MCF 10A (cell line): ENCODE measurements at regions of chr1 and their contacts with region 1.

Region 1: DNA sequence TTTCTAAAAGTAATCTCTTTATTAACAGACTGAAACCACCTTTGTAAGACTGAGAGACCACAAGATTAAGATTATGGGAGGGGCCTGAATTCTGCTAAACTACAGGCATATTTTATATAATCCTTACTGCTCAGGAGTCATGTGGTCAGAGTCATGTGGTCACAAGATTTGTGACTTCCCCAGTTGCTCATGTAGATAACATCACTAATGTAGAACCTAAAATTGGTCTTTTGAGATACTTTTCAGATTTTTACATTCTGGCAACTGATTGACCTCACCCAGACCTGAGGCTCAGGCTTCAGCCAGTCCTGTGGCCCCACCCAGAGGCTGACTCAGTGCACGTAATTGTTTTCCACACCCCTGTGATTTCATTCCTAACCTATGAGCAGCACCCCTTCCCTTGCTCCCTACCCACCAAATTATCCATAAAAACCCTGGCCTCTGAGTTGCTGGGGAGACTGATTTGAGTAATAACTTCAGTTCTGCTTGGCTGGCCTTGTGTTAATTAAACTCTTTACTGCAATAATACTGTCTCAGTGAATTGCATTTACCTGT is 41.8 kb upstream of the ZNF326 start:
- DNase-seq: peak; percentile 87
- H3K4me3 Mint-ChIP-seq: no peak overlapping the region
- H3K27ac Mint-ChIP-seq: peak overlapping the region; percentile 64
- H3K4me1 Mint-ChIP-seq: peaks cover 17% of the 10 kb centered on the region
- H3K27me3 Mint-ChIP-seq: no peaks in the 10 kb centered on the region
- CTCF ChIP-seq: peak; percentile 24

Region 2: DNA sequence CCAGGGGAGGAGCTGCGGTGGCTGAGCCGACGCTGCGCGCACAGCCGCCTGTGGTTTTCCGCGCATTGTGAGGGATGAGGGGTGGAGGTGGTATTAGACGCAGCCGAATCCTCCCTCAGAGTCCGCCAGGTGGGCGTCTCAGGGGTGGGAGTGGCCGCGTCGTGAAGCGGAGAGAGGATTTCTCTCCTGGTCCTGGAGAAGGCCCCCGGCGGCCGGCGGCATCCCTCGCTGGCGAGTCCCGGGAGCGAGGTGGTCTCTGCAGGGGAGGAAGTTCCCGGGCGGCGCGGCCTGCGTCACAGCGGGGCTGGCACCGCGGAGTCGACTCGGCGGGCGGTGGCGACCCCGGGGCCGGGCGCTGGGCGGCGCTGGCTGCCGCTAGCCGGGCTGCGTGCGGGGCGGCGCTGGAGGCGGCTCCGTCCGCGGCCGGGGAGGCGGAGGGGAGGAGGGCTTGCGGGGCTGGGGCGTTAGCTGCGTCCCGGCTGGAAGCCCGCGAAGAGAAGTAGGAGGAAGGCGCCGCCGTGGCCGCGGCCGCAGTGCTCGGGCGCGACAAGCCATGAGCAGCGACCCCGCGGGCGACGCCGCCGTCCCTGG is 320.4 kb before region 1 on chr1 and contains the start of gene LRRC8C:
- CTCF ChIA-PET with region 1: no interaction called
- POLR2A ChIA-PET with region 1: no interaction called
- intact Hi-C with region 1: loop called (anchors 10 kb)
- DNase-seq: peak; percentile 59
- H3K4me3 Mint-ChIP-seq: peak within 1 kb of the TSS; percentile 85
- H3K27ac Mint-ChIP-seq: peak within 1 kb of the TSS; percentile 57
- H3K4me1 Mint-ChIP-seq: peaks cover 18% of the 10 kb centered on the region
- H3K27me3 Mint-ChIP-seq: no peaks in the 10 kb centered on the region
- CTCF ChIP-seq: peak; percentile 40
- total RNA-seq, gene LRRC8C: 4.4 TPM in 2 replicates

Region 3: GRCh38 chr1:89804642-89805237 is 148.4 kb before region 1 on chr1:
- CTCF ChIA-PET with region 1: interaction called, 5 read pairs
- POLR2A ChIA-PET with region 1: no interaction called
- intact Hi-C with region 1: loop called (anchors 1 kb)
- DNase-seq: peak; percentile 85
- H3K4me3 Mint-ChIP-seq: no peak overlapping the region
- H3K27ac Mint-ChIP-seq: no peak overlapping the region
- H3K4me1 Mint-ChIP-seq: no peaks in the 10 kb centered on the region
- H3K27me3 Mint-ChIP-seq: no peaks in the 10 kb centered on the region
- CTCF ChIP-seq: peak; percentile 83

Region 4: GRCh38 chr1:89865498-89866385 is 87.4 kb before region 1 on chr1:
- CTCF ChIA-PET with region 1: no interaction called
- POLR2A ChIA-PET with region 1: no interaction called
- intact Hi-C with region 1: no loop called
- DNase-seq: peak; percentile 60
- H3K4me3 Mint-ChIP-seq: no peak overlapping the region
- H3K27ac Mint-ChIP-seq: peak overlapping the region; percentile 5
- H3K4me1 Mint-ChIP-seq: peaks cover 14% of the 10 kb centered on the region
- H3K27me3 Mint-ChIP-seq: no peaks in the 10 kb centered on the region
- CTCF ChIP-seq: no peak

Region 5: GRCh38 chr1:89890085-89890752 is 62.9 kb before region 1 on chr1:
- CTCF ChIA-PET with region 1: no interaction called
- POLR2A ChIA-PET with region 1: no interaction called
- intact Hi-C with region 1: loop called (anchors 1 kb)
- DNase-seq: peak; percentile 99
- H3K4me3 Mint-ChIP-seq: peak overlapping the region; percentile 70
- H3K27ac Mint-ChIP-seq: peak overlapping the region; percentile 87
- H3K4me1 Mint-ChIP-seq: peaks cover 63% of the 10 kb centered on the region
- H3K27me3 Mint-ChIP-seq: no peaks in the 10 kb centered on the region
- CTCF ChIP-seq: no peak

Region 6: GRCh38 chr1:89929467-89930063 is 23.6 kb before region 1 on chr1:
- CTCF ChIA-PET with region 1: no interaction called
- POLR2A ChIA-PET with region 1: no interaction called
- intact Hi-C with region 1: no loop called
- DNase-seq: no peak
- H3K4me3 Mint-ChIP-seq: no peak overlapping the region
- H3K27ac Mint-ChIP-seq: no peak overlapping the region
- H3K4me1 Mint-ChIP-seq: peaks cover 9% of the 10 kb centered on the region
- H3K27me3 Mint-ChIP-seq: no peaks in the 10 kb centered on the region
- CTCF ChIP-seq: no peak

Region 7: GRCh38 chr1:89942825-89943688 is 10.1 kb before region 1 on chr1:
- CTCF ChIA-PET with region 1: no interaction called
- POLR2A ChIA-PET with region 1: interaction called, 10 read pairs
- intact Hi-C with region 1: no loop called
- DNase-seq: peak; percentile 84
- H3K4me3 Mint-ChIP-seq: no peak overlapping the region
- H3K27ac Mint-ChIP-seq: peak overlapping the region; percentile 26
- H3K4me1 Mint-ChIP-seq: peaks cover 20% of the 10 kb centered on the region
- H3K27me3 Mint-ChIP-seq: no peaks in the 10 kb centered on the region
- CTCF ChIP-seq: no peak